Activated T-helper 2 cell treated with anti-CD3 and anti-CD28 coated beads, Interferon-gamma antibody, Interleukin-2, Interleukin-4, amounts not matched to agents 10 μg/mL and 5 μg/mL and 100 μg/mL, durations not matched to agents 14 hours and 24 hours and 36 hours (primary cell): ENCODE measurements at regions of chr2 and their contacts with region 1.

Region 1: GRCh38 chr2:231514103-231514950 is 15.9 kb downstream of the NMUR1 start:
- DNase-seq: peak; percentile 98
- H3K4me3 Mint-ChIP-seq: peak overlapping the region; percentile 95
- H3K27ac Mint-ChIP-seq: peak overlapping the region; percentile 98
- H3K4me1 Mint-ChIP-seq: peaks cover 14% of the 10 kb centered on the region
- H3K27me3 Mint-ChIP-seq: no peaks in the 10 kb centered on the region

Region 2: GRCh38 chr2:231482806-231483391 is 31.4 kb before region 1 on chr2:
- intact Hi-C with region 1: loop called (anchors 1 kb)
- DNase-seq: peak; percentile 67
- H3K4me3 Mint-ChIP-seq: peak overlapping the region; percentile 75
- H3K27ac Mint-ChIP-seq: peak overlapping the region; percentile 75
- H3K4me1 Mint-ChIP-seq: peaks cover 6% of the 10 kb centered on the region
- H3K27me3 Mint-ChIP-seq: no peaks in the 10 kb centered on the region

Region 3: GRCh38 chr2:231524477-231525247 is 10.3 kb after region 1 on chr2:
- intact Hi-C with region 1: no loop called
- DNase-seq: no peak
- H3K4me3 Mint-ChIP-seq: peak overlapping the region; percentile 6
- H3K27ac Mint-ChIP-seq: peak overlapping the region; percentile 28
- H3K4me1 Mint-ChIP-seq: peaks cover 60% of the 10 kb centered on the region
- H3K27me3 Mint-ChIP-seq: peaks cover 15% of the 10 kb centered on the region

Region 4: DNA sequence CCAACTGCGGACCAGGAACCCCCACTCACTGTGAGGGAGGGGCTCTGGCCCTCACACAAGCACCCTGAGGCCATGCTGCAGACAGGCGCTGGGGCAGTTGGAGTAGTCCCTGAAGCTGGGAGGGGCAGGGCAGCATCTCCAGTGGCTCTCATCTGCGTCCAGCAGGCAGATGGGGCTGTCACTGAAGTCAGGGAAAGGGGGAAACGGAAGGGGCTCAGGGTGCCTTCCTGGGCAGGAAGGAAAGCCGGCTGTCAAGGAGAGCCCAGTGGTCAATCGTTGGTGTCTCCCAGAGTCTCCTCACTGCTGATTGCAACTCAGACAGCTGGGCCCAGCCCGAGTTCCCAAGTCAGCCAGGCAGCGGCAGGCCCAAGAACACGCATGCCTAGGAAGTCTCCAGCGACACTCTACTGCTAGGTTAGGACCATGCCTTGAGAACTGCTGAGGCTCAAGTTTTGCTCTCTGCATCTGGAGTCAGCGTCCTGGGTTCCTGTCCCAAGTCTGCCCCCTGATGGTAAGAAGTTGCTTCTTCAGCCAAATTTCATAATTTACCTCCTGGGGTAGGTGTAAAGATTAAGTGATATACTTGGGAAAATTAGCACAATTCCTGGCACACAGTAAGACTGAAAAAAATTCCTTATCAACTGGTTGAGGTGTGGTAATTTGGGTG is 43.4 kb after region 1 on chr2:
- intact Hi-C with region 1: loop called (anchors 1 kb)
- DNase-seq: peak; percentile 61
- H3K4me3 Mint-ChIP-seq: no peak overlapping the region
- H3K27ac Mint-ChIP-seq: no peak overlapping the region
- H3K4me1 Mint-ChIP-seq: peaks cover 31% of the 10 kb centered on the region
- H3K27me3 Mint-ChIP-seq: no peaks in the 10 kb centered on the region

Region 5: DNA sequence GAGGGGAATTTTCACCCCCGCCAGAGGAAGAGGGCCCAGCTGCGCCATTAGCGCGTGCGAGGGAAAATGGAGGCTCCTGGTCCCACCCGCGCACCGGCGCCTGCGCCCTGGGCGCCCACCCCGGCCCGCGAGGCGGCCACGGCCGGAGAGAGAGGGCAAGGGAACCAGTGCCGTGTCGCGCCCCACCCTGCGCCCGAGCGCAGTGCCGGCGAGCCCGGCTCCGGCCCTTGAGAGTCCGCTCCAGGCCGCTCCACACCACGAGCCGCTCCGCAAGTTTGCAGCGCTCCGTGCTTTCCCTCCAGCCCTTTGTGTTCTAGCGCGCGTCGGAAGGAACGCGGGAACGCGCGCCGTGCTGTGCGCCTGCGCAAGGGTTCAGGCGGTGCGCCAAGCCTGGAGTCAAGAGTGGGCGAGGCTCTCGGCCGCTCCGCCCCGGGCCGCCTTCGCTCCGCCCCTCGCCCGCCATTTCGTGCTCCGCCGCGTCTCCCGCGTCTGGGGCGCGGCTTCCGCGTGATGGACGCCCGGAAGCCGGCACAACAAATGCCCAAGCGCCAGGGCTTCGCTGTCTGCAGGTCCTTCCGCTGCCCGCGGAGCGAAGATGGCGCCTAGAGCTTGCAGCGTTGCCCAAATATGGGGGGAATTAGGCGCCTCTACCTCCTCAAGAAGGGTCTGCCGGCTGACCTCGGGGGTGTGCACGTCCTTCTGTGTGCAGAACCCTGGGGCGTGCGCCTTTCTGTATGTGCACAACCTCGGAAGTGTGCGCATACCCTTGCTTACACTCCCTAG is 147.9 kb after region 1 on chr2:
- intact Hi-C with region 1: loop called (anchors 1 kb)
- DNase-seq: peak; percentile 98
- H3K4me3 Mint-ChIP-seq: peak overlapping the region; percentile 56
- H3K27ac Mint-ChIP-seq: peak overlapping the region; percentile 93
- H3K4me1 Mint-ChIP-seq: peaks cover 14% of the 10 kb centered on the region
- H3K27me3 Mint-ChIP-seq: no peaks in the 10 kb centered on the region

Region 6: DNA sequence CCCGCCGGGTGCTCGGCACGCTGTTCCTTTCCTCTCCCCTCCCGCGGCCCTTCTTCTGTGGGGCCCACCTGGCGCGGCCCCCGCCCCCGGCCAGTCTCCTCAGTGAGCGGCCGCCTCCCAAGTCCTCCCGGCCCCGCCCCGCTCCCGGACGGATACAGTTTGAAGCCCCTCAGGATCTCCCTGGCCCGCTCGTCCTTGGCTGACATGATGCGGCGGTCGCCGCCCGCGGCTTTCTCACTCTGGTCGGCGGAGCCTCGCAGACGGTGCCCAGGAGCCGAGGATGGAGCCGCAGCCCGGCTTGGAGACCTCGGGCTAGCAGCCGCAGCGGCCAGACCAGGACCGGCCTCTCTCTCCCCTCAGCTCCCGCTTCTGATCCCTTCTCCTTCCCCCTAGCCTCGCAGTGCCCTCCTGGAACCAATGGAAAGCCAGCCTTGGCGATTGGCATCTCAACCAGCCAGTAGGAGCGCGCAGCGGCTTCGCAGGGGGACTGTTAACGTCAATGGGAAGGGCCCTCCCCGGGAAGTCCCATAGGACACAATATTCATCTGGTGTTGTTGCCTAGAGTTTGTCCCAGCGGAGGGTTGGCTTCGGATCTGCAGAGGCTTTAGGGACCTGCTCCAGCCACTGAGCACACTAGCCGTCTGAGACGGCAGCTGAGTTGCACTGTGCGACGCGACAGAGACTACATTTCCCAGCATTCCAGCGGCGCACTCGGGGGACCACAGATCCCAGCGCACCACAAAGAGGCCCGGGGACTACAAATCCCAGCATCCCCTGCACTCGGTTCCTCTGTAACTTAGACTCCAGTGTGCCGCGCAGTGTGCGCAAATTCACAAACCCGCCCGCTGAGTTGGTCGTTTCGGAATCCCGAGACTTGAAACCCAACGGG is 266.8 kb after region 1 on chr2 and contains the start of gene PDE6D:
- intact Hi-C with region 1: loop called (anchors 1 kb)
- DNase-seq: peak; percentile 97
- H3K4me3 Mint-ChIP-seq: peak within 1 kb of the TSS; percentile 97
- H3K27ac Mint-ChIP-seq: peak within 1 kb of the TSS; percentile 93
- H3K4me1 Mint-ChIP-seq: peaks cover 45% of the 10 kb centered on the region
- H3K27me3 Mint-ChIP-seq: no peaks in the 10 kb centered on the region
- total RNA-seq, gene PDE6D: 35.5 and 35.6 TPM in 2 replicates